ENCODE measurements at regions of chr16 and their contacts with region 1.

Region 1: DNA sequence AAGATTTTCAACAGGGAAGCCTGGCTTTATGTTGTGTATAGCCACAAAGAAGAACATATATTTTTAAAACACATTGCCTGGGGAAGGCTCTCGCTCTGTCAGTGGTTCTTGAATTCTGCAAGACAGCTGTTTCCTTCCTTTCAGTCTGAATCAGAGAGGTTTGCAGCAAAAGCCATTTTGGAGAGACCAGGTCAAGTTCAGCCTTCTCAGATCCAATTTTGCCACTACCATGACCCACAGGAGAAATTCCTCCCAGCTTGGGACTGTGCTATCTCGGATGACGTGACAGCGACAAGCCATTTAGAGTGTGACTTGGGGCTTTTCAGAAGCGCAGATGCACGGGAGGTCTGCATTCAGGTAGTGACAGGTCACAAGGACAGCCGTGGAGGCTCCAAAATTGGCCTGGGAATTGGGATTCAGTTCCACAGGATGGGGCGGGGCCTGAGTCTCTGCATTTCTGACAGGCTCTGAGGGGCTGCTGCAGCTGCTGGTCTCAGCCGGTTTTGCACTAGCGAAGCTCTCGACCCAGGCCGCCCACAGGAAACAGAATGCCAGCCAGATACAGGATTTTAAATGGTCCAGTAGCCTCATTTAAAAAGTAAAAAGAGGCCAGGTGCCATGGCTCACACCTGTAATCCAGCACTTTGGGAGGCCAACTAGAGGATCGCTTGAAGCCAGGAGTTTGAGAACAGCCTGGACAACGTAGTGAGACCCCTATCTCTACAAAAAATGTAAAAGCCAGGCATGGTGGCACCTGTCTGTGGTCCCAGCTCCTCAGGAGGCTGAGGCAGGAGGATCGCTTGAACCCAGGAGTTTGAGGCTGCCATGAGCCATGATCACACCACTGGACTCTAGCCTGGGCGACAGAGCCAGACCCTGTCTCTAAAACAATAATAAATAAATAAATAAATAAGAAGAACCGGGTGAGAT is 196.6 kb upstream of the CIBAR2 start:
- DNase-seq: no peak
- ATAC-seq: no peak
- H3K4me3 ChIP-seq: no peak overlapping the region
- H3K27ac ChIP-seq: peak overlapping the region; percentile 78
- H3K4me1 ChIP-seq: peaks cover 51% of the 10 kb centered on the region
- H3K27me3 ChIP-seq: no peaks in the 10 kb centered on the region
- CTCF ChIP-seq: no peak

Region 2: DNA sequence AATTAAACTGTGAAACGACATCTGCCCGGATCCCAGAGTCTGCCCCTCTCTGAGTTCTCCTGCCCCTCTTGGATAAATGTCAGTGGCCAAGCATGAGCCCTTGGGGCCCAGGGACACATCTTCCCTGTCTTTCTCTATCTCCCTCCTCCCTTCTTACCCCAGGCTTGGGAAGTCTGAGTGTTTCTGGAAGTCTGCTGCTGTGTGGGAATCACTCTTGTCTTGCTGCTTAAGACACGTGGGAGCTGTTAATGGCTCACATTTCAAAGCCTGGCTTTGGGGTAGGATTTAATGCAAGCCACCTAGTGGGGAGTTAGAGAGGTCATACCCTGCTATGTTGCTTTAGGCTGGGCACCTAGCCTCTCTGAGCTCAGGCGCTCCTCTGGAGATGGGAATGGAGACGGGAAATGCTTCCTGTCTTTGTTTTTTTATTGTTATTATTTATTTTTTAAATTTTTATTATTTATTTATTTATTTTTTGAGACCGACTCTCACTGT is 21.9 kb after region 1 on chr16:
- CTCF ChIA-PET with region 1: interaction called, 11 read pairs
- POLR2A ChIA-PET with region 1: no interaction called
- in situ Hi-C with region 1: no loop called
- intact Hi-C with region 1: no loop called
- DNase-seq: peak; percentile 41
- ATAC-seq: peak; percentile 80
- H3K4me3 ChIP-seq: peak overlapping the region; percentile 5; a peak in 3 of 4 replicates
- H3K27ac ChIP-seq: peak overlapping the region; percentile 94
- H3K4me1 ChIP-seq: peaks cover 46% of the 10 kb centered on the region
- H3K27me3 ChIP-seq: no peaks in the 10 kb centered on the region
- CTCF ChIP-seq: no peak; the same call in 1 of the 2 replicates

Region 3: GRCh38 chr16:85337910-85338637 is 29.2 kb after region 1 on chr16:
- CTCF ChIA-PET with region 1: interaction called, 3 read pairs
- POLR2A ChIA-PET with region 1: interaction called, 10 read pairs
- in situ Hi-C with region 1: no loop called
- intact Hi-C with region 1: no loop called
- DNase-seq: no peak
- ATAC-seq: no peak
- H3K4me3 ChIP-seq: no peak overlapping the region
- H3K27ac ChIP-seq: no peak overlapping the region; the same call in 1 of the 2 replicates
- H3K4me1 ChIP-seq: peaks cover 21% of the 10 kb centered on the region
- H3K27me3 ChIP-seq: no peaks in the 10 kb centered on the region
- CTCF ChIP-seq: no peak

Region 4: DNA sequence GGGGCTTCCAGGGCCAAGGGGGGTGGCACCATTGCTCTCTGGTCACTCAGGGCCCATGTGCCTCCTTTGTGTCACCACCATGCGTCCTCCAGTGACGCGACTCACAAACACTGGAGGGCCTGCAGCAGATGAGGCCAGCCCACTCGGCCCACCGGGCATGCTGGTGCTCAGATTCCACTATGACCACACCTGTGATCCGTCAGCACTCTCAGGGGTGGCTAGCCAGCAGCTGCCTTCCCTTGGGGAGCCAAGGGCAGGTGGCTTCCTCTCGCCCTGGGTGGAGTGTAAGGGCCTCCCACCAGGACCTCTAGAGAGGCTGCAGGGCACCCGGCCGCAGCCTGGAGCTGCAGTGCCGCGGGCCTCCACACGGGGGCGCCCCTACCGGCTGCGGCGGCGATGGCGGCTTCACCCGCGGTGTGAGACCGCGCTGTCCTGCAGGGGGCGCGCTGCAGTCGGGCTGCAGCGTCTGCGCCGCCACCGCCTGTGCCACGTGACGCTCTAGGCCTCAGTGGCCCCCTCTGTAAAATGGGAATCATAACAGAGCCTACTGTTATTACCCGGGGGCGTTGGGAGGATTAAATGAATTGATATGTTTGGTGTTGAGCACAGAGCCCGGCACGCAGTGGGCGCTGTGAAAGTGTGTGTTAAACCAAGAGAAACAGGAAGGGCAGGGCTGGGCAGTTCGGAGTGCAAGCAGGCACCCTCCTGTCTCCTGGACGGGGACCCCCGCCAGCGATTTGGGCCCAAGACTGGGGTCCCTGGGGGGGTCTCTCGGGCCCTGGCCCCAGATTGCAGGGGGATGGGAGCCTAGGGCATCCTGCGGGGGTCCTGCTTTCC is 111.8 kb after region 1 on chr16:
- CTCF ChIA-PET with region 1: no interaction called
- POLR2A ChIA-PET with region 1: interaction called, 13 read pairs
- in situ Hi-C with region 1: no loop called
- intact Hi-C with region 1: no loop called
- DNase-seq: no peak
- ATAC-seq: peak; percentile 79
- H3K4me3 ChIP-seq: no peak overlapping the region
- H3K27ac ChIP-seq: no peak overlapping the region
- H3K4me1 ChIP-seq: peaks cover 3% of the 10 kb centered on the region; the same call in 1 of the 2 replicates
- H3K27me3 ChIP-seq: no peaks in the 10 kb centered on the region
- CTCF ChIP-seq: peak; percentile 100